ENCODE measurements at regions of chr4 and their contacts with region 1.

Region 1: DNA sequence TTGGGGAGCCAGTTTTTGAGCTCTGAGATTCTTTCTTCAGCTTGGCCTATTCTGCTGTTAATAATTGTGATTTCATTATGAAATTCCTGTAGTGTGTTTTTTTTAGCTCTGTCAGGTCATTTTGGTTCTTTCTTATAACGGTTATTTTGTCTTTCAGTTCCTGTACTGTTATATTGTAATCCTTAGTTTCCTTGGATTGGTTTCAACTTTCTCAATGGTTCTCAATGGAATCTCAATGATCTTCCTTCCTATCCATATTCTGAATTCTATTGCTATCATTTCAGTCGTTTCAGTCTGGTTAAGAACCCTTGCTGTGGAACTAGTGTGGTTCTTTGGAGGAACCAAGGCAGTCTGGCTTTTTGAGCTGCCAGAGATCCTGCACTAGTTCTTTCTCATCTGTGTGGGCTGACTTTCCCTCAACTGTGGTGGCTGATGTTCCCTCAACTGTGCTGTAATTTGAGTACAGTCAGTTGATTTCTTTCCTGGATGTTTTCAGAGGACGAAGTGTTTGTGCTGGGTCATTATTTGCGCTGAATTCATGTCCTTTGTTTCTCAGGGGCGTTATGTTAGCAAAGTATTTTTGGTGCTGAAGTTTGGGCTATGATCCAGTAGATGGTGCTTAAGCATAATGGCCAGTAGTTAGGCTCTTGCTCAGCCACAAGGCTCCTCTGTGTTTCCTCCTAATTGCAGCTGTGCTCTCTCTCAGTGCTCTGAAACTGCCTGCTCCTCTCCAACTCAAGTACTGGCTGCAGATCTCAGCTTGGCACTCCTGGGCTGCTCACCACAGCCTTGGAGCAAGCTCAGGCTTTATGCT is 27.5 kb downstream of the ENPEP start:
- DNase-seq: no peak

Region 2: GRCh38 chr4:108766058-108766457 is 1737.4 kb before region 1 on chr4:
- intact Hi-C with region 1: loop called in 1 of 2 experiments (anchors 5 kb)
- DNase-seq: no peak

Region 3: GRCh38 chr4:110224812-110225211 is 278.7 kb before region 1 on chr4:
- intact Hi-C with region 1: no loop called
- DNase-seq: no peak

Region 4: GRCh38 chr4:110484740-110485139 is 18.7 kb before region 1 on chr4:
- intact Hi-C with region 1: no loop called
- DNase-seq: no peak

Measured in posterior vena cava (tissue), 2 donors.